ENCODE measurements at regions of chr19 and their contacts with region 1.

Region 1: DNA sequence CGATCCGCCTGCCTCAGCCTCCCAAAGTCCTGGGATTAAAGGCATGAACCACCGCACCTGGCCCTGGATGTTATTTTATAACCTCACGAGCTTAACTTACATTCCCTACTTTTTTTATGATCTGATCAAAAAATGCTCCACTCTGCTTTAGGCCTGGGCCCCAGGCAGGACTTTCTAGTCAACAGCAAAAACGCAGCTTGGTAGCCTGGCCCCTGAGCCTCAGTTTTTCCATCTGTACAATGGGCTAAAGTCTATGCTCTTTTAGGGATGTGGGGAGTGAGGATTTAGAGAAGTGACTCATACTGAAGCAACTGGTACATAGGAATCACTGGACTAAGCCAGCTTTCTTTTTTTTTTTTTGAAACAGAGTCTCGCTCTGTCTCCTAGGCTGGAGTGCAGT is 11.9 kb upstream of the PIK3R2 start:
- DNase-seq: no peak
- ATAC-seq: no peak
- H3K4me3 ChIP-seq: no peak overlapping the region
- H3K27ac ChIP-seq: no peak overlapping the region
- H3K4me1 ChIP-seq: no peaks in the 10 kb centered on the region
- H3K27me3 ChIP-seq: no peaks in the 10 kb centered on the region
- CTCF ChIP-seq: no peak
- EP300 ChIP-seq: no peak
- POLR2A ChIP-seq: no peak
- RAD21 ChIP-seq: no peak

Region 2: GRCh38 chr19:18152444-18152816 is 11.4 kb after region 1 on chr19:
- CTCF ChIA-PET with region 1: interaction called, 5 read pairs
- POLR2A ChIA-PET with region 1: interaction called, 11 read pairs
- RAD21 ChIA-PET with region 1: no interaction called
- SMC1A ChIA-PET with region 1: interaction called, 5 read pairs
- in situ Hi-C with region 1: no loop called
- intact Hi-C with region 1: no loop called
- DNase-seq: peak; percentile 99
- ATAC-seq: peak; percentile 85
- H3K4me3 ChIP-seq: peak overlapping the region; percentile 59; the same call in 1 of the 2 replicates
- H3K27ac ChIP-seq: peak overlapping the region; percentile 88
- H3K4me1 ChIP-seq: peaks cover 15% of the 10 kb centered on the region
- H3K27me3 ChIP-seq: no peaks in the 10 kb centered on the region
- CTCF ChIP-seq: peak; percentile 79 to 90 (median 85)
- EP300 ChIP-seq: peak in 1 of 2 experiments; percentile 7; a peak in 1 of 4 replicates
- POLR2A ChIP-seq: peak; percentile 68
- RAD21 ChIP-seq: peak; percentile 46; the same call in 1 of the 2 replicates

Region 3: DNA sequence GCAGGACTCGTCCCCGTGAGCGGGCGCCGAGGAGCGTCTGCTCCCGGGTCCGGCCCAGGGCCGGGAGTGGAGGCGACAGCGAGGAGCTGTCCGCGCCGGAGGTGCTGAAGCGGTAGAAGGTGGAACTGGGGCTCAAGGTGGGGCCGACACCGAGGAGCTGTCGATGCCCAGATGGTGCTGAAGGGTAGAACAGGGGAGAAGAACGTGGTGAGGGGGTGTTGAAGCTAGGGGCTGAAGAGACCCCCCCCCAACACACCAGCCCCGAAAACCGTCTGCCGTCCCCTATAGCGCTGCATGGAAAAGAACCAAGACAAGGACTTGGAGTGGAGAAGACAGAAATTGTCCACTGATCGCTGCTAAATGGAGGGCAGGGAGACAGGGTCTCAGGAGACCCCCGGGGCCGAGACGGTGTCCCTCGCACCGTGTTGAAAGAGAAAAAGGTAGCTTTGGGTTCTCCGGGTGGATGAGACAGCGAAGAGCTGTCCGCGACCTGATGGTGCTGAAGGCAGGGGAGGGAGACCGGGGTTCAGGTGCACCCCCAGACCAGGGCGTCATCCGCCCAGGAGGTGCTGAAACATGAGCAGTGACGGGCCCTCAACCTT is 92.3 kb after region 1 on chr19:
- CTCF ChIA-PET with region 1: no interaction called
- POLR2A ChIA-PET with region 1: no interaction called
- RAD21 ChIA-PET with region 1: no interaction called
- SMC1A ChIA-PET with region 1: no interaction called
- in situ Hi-C with region 1: no loop called
- intact Hi-C with region 1: no loop called
- DNase-seq: no peak
- ATAC-seq: peak; percentile 47; the same call in 2 of the 3 replicates
- H3K4me3 ChIP-seq: no peak overlapping the region
- H3K27ac ChIP-seq: no peak overlapping the region
- H3K4me1 ChIP-seq: no peaks in the 10 kb centered on the region
- H3K27me3 ChIP-seq: no peaks in the 10 kb centered on the region; a peak in 2 of 4 replicates
- CTCF ChIP-seq: no peak
- EP300 ChIP-seq: no peak
- POLR2A ChIP-seq: no peak
- RAD21 ChIP-seq: no peak